ENCODE measurements at regions of chr7 and their contacts with region 1.

Region 1: DNA sequence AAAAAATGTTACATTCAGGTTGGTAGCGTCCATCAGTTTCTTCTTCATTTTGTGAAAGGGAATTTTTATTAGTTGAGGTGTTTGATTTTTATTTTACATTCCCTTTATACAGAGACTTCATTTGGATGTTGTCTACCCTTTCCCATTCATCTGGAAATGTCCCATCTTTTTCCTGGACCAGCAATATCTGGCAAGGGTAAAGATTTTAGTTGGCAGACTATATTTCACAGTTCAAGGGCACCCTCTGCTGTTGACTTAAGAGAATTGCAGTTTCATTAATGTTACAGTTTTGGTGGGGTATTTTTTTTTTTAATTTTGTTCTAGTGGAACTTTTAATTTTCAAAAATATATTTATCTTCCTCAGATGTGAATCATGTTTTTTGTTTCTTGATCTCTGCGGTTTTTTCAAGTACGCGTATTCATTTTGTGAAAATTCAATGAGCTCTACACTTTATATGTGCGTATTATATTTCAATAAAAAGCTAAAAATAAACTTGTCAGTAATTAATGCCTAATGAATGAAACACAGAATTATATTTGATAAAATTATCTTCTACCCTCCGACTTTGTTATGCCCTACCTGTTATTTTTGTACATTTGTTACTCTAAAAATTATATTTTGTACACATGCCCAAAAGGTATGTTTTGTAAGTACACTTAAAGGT is 97.9 kb upstream of the KLF14 start:
- DNase-seq: peak; percentile 35
- H3K4me3 ChIP-seq: no peak overlapping the region
- H3K27ac ChIP-seq: no peak overlapping the region
- H3K4me1 ChIP-seq: peaks cover 10% of the 10 kb centered on the region
- H3K27me3 ChIP-seq: no peaks in the 10 kb centered on the region
- CTCF ChIP-seq: peak; percentile 46 to 52
- POLR2A ChIP-seq: no peak

Region 2: DNA sequence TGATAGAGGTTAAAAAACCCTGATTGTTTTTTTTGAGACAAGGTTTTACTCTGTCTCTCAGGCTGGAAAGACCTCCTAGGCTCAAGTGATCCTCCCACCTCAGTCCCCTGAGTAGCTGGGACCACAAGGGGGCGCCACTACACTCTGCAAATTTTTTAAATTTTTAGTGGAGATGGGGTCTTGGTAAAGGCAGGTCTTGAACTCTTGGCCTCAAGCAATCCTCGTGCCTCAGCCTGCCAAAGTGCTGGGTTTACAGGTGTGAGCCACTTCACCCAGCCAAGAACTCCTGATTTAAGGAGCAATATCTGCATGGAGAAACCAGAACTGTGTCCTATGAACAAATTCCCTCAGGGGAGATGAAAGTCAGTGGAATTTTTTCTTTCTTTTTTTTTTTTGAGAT is 768.9 kb before region 1 on chr7:
- CTCF ChIA-PET with region 1: interaction called, 7 read pairs
- POLR2A ChIA-PET with region 1: no interaction called
- dilution Hi-C with region 1: no loop called
- intact Hi-C with region 1: loop called (anchors 1 kb)
- DNase-seq: peak; percentile 48
- H3K4me3 ChIP-seq: no peak overlapping the region
- H3K27ac ChIP-seq: no peak overlapping the region
- H3K4me1 ChIP-seq: peaks cover 8% of the 10 kb centered on the region
- H3K27me3 ChIP-seq: no peaks in the 10 kb centered on the region
- CTCF ChIP-seq: peak; percentile 78 to 86
- POLR2A ChIP-seq: no peak

Region 3: DNA sequence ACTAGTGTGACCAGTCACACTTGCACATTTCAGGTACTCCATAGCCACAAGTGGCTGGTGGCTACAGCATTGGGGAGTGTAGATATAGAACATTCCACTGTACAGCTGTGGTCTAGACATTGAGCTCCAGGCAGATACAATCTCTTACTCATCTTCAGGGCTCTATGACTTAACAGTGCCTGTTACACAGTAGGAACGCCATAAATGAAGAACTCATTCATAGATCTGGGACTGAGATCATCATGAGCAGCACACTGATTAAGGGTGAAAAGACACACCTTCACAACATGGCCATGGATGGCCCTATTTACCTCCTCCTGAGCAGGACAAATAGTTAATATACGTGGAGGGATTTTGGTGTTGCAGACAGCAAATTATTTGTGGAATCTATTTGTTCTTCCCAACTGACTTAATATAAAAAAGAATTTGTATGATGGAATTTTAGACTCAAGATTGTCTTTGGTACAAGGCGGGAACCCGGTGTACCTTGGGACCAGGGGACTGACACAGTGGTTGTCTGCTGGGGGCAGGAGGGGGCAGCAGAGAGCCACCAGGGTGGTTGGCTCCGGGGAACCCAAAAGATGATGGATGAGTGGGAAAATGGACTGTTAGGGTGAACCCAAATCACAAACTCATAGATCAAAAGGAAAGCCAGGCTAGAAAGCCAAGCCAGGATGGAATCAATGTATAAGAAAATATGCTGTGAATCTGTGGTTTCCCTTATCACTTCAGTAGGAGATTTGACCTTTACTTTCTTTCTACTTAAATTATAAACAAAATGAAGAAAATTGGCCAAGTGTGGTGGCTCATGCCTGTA is 589.5 kb before region 1 on chr7:
- CTCF ChIA-PET with region 1: no interaction called
- POLR2A ChIA-PET with region 1: no interaction called
- dilution Hi-C with region 1: no loop called
- intact Hi-C with region 1: loop called (anchors 10 kb)
- DNase-seq: peak; percentile 50
- H3K4me3 ChIP-seq: no peak overlapping the region
- H3K27ac ChIP-seq: no peak overlapping the region
- H3K4me1 ChIP-seq: no peaks in the 10 kb centered on the region
- H3K27me3 ChIP-seq: peaks cover 0 to 2% of the 10 kb centered on the region in 2 experiments
- CTCF ChIP-seq: peak; percentile 80 to 92
- POLR2A ChIP-seq: no peak

Region 4: GRCh38 chr7:130491841-130492522 is 340.0 kb before region 1 on chr7 and contains the start of gene MEST:
- CTCF ChIA-PET with region 1: interaction called, 3 read pairs
- POLR2A ChIA-PET with region 1: no interaction called
- dilution Hi-C with region 1: no loop called
- intact Hi-C with region 1: loop called (anchors 2 kb)
- DNase-seq: peak; percentile 21
- H3K4me3 ChIP-seq: peak within 1 kb of the TSS in 2 of 3 experiments; percentile 29 to 55
- H3K27ac ChIP-seq: no peak within 1 kb of the TSS
- H3K4me1 ChIP-seq: peaks cover 30% of the 10 kb centered on the region
- H3K27me3 ChIP-seq: no peaks in the 10 kb centered on the region
- CTCF ChIP-seq: no peak
- POLR2A ChIP-seq: peak; percentile 57
- total RNA-seq, gene MEST: 52.6 and 62.1 TPM in 2 replicates

Region 5: DNA sequence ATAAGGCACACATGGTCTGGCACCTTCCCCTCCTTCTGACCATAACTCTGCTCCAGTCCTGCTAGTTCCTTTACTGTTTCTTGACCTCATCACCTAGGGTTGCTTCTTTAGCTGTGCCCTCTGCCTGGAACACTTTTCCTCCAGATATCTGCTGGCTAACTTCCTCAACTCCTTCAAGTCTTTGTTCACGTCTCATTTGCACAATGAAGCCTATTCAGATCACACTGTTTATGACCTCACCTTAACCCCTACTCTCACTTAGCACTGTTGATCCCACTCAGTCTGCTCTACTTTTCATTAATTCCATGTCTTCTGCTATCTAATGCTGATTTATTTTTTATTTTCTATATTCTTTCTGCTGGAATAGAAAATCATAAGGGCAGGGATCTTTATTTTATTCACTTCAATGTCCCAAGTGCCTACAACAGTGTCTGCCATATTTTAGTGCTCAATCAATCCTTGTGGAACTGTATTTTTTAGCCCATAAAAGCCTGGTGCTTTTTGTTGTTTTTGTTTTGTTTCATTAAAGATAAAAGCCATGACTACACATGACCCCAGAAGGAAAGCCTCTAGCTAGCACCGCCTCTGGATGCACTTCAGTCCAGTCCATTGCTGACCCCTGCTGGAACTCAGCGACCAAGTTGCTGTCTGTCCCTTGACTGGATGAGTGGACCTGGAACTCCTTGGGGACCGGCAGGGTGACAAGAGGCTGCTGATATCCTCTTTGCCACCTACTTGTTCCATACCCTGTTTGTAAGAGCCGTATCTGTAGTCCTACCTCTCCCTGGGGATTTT is 110.3 kb before region 1 on chr7:
- CTCF ChIA-PET with region 1: no interaction called
- POLR2A ChIA-PET with region 1: no interaction called
- dilution Hi-C with region 1: no loop called
- intact Hi-C with region 1: loop called (anchors 10 kb)
- DNase-seq: peak; percentile 71
- H3K4me3 ChIP-seq: no peak overlapping the region
- H3K27ac ChIP-seq: no peak overlapping the region
- H3K4me1 ChIP-seq: no peaks in the 10 kb centered on the region
- H3K27me3 ChIP-seq: peaks cover 21 to 28% of the 10 kb centered on the region in 2 experiments
- CTCF ChIP-seq: peak; percentile 55 to 67
- POLR2A ChIP-seq: no peak

Region 6: DNA sequence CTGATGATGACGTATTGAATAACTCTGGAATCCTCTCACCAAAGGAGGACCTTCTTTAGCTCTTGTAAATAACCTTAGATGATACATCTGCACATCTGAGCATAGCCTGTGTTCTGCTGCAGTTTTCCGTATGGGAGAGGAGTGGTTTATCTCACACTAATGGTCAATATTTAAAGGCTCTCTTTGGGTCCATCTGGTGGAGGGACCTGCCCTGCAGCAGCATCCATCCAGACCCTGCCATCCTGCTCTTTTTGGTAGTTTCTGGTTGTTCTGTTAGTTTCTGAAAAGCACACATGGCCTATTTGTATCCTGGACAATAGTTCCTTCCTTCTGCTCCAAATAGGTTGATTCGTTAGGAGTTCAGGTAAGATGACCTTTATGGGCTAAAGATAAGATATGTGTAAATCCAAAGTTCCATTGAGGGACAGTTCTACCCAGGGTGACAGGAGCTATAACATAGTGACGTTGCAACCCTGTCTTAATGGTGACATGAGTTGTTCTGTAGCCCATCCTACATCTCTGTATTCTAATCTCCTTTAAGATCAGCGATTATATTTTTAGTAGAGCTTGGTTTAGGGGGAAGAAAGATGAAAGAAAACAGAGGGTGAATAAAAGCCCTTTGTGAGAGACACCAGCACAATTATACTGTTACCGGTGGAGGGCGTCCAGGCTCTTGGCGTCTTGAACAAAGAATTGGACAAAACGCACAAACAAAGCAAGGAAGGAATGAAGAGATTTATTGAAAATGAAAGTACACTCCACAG is 37.9 kb before region 1 on chr7:
- CTCF ChIA-PET with region 1: interaction called, 11 read pairs
- POLR2A ChIA-PET with region 1: no interaction called
- dilution Hi-C with region 1: no loop called
- intact Hi-C with region 1: no loop called
- DNase-seq: peak; percentile 6
- H3K4me3 ChIP-seq: no peak overlapping the region
- H3K27ac ChIP-seq: no peak overlapping the region
- H3K4me1 ChIP-seq: no peaks in the 10 kb centered on the region
- H3K27me3 ChIP-seq: peaks cover 3 to 4% of the 10 kb centered on the region in 2 experiments
- CTCF ChIP-seq: peak in 1 of 2 donors; percentile 5
- POLR2A ChIP-seq: no peak

Region 7: DNA sequence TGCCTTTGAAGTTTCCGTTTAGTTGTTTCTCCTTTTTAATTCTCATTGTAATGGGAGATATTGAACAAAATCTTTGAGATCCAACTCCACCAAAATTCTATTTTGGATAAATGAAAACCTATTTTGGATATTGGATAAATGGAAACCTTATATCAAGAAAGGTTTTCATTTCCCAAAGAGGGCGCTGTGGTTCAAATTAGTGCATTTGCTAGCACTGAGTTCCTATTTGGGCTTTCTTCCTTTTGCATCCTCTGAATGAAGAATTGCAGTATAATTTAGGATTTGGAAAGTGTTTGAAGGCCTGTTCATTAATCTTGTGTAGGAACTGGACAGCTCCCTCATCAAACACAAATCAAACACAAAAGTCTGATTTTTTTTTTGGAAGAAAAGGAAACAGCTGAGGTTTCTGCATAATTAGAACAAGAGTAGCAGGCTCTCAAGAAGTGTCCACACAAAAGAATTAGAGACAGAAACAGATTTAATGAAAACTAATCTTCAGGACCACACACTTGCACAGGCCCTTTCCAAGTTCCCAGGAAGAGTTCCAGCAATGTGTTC is 17.1 kb before region 1 on chr7:
- CTCF ChIA-PET with region 1: interaction called, 10 read pairs
- POLR2A ChIA-PET with region 1: no interaction called
- dilution Hi-C with region 1: no loop called
- intact Hi-C with region 1: no loop called
- DNase-seq: peak; percentile 37
- H3K4me3 ChIP-seq: no peak overlapping the region
- H3K27ac ChIP-seq: no peak overlapping the region
- H3K4me1 ChIP-seq: no peaks in the 10 kb centered on the region
- H3K27me3 ChIP-seq: peaks cover 0 to 3% of the 10 kb centered on the region in 2 experiments
- CTCF ChIP-seq: peak; percentile 34 to 36
- POLR2A ChIP-seq: no peak